Cardiac septum (tissue), 1 donor: ENCODE measurements at regions of chr5 and their contacts with region 1.

Region 1: DNA sequence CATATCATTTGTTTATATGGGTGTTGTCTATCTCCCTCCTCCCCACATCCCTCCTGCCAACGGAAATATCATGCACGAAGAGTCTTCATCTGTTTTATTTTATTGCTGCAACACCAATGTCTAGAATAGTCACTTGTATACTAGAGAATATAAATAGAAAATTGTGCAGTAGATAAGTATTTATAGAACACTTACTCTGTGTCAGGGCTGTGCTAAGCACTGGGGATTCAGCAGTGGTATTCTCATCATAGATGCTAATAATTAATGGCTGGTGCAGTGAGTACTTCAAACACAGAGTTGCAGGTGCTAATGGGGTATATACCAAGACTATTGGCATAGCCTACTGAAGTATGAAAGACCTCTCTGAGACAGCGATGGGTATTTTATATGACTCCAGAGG is 353.5 kb upstream of the CDH6 start:
- DNase-seq: no peak

Region 2: GRCh38 chr5:30874241-30875034 is 34.5 kb after region 1 on chr5:
- intact Hi-C with region 1: loop called (anchors 2 kb)
- DNase-seq: no peak

Region 3: DNA sequence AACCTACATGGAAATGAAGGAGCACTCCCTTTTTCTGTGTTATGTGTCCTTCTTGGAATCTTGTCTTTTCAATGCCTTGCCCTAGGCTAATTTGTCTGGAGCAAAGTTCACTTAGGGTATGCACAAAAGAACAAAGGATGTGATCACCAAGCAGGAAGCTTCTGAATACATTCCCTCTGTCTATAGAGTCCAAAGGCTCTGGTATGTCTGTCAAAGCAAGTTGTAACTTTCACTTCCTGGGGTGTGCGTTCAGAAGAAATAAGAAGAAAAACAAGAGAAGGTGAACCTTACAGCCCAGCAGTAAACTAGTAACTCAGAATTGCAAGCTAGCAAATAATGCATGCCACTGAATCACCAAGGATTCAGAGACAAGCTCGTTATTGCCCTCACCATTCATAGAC is 321.8 kb after region 1 on chr5:
- intact Hi-C with region 1: no loop called
- DNase-seq: no peak